Prostate gland (tissue), 2 donors: ENCODE measurements at regions of chrX and their contacts with region 1.

Region 1: DNA sequence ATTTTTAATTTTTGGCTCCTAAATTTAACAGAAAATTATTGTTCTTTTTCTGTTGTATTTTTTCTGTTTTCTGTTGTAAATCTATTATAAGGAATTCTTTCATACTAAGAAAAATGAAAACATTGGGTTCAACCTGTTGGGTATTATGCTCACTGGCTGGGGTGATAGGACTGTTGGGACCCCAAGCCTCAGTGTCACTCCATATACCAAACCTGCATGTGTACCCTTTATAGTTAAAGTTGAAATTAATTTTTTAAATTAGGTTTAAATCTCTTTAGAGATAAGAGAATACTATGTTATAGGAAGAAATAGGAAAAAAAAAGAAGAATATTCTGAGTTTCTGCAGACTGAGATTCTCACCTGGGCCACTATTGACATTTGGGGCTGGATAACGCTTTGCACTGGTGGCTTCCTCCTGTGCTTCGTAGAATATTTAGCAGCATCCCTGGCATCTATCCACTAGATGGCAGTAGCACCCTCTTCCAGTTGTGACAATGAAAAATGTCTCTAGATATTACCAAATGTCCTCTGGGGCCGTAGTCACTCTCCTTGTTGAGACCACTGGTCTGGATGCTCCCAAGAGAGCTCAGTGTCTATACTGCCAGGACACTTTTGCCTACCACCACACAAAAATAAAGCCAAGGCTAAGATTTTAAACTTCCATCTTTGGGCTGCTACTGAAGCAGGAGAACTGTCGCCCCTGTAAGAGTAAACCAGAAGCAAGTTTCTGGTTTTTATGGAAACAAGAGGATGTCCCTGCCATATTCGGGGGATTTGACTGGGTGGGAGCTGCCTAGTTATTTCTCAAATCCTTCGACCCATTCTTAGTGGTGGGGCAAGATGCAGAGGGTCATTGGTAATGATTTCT is 22.4 kb upstream of the CLTRN start:
- DNase-seq: peak; percentile 41
- H3K4me3 ChIP-seq: no peak overlapping the region
- H3K27ac ChIP-seq: no peak overlapping the region
- H3K4me1 ChIP-seq: no peaks in the 10 kb centered on the region
- H3K27me3 ChIP-seq: no peaks in the 10 kb centered on the region
- CTCF ChIP-seq: peak; percentile 17 to 65 (median 56)
- POLR2A ChIP-seq: no peak

Region 2: GRCh38 chrX:15737960-15738902 is 51.2 kb after region 1 on chrX and contains the start of gene CA5B:
- intact Hi-C with region 1: loop called (anchors 10 kb)
- DNase-seq: peak; percentile 94
- H3K4me3 ChIP-seq: peak within 1 kb of the TSS; percentile 44 to 49
- H3K27ac ChIP-seq: peak within 1 kb of the TSS; percentile 61 to 71
- H3K4me1 ChIP-seq: no peaks in the 10 kb centered on the region
- H3K27me3 ChIP-seq: no peaks in the 10 kb centered on the region
- CTCF ChIP-seq: peak in 1 of 4 experiments; percentile 4
- POLR2A ChIP-seq: peak; percentile 50
- total RNA-seq, gene CA5B: 4.6 to 35.7 TPM

Region 3: GRCh38 chrX:15781961-15782699 is 95.1 kb after region 1 on chrX:
- intact Hi-C with region 1: no loop called
- DNase-seq: no peak
- H3K4me3 ChIP-seq: no peak overlapping the region
- H3K27ac ChIP-seq: no peak overlapping the region
- H3K4me1 ChIP-seq: no peaks in the 10 kb centered on the region
- H3K27me3 ChIP-seq: no peaks in the 10 kb centered on the region
- CTCF ChIP-seq: no peak
- POLR2A ChIP-seq: no peak